Mammary epithelial cell (primary cell): ENCODE measurements at regions of chr17 and their contacts with region 1.

Region 1: DNA sequence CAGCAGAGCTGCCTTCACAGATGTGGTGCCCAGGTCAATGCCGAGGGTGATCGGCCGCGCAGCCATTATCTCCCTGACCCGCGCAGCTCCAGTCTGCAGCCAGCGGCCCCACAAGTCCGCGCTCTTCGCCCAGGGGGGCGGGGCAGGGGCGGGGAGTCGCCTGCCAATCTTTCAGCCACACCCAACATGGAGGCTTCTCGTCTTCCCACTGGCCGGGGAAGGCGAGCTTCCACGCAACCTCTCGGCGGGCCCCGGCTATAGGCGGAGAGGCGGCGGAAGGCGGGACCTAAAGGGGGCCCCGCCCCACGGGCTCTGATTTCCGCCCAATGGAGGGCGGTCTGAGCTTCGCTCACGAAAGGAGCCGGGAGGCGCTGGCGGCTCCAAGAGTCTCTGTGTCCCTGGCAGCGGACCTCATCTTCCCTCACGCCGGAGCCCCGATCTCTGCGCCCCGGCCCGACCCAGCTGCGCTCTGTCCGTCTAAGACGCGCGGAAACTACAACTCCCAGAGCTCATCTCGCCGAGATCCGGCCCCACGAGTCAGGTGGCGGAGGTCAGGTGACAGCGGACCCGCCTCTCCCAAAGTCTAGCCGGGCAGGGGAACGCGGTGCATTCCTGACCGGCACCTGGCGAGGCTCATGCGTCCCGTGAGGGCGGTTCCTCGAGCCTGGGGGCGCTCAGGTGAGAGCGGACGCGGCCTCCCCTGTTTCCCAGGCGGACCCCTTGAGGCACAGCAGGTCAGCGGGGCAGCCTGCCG is at the starts of genes CTNS and SHPK:
- DNase-seq: peak; percentile 95
- H3K4me3 ChIP-seq: peak within 1 kb of the TSS; percentile 70 to 98 (median 95)
- H3K27ac ChIP-seq: peak within 1 kb of the TSS; percentile 87
- H3K4me1 ChIP-seq: peaks cover 3% of the 10 kb centered on the region
- H3K27me3 ChIP-seq: no peaks in the 10 kb centered on the region
- CTCF ChIP-seq: no peak
- total RNA-seq, gene CTNS: 16.9 to 18.8 TPM
- total RNA-seq, gene SHPK: 11.8 to 14.5 TPM

Region 2: DNA sequence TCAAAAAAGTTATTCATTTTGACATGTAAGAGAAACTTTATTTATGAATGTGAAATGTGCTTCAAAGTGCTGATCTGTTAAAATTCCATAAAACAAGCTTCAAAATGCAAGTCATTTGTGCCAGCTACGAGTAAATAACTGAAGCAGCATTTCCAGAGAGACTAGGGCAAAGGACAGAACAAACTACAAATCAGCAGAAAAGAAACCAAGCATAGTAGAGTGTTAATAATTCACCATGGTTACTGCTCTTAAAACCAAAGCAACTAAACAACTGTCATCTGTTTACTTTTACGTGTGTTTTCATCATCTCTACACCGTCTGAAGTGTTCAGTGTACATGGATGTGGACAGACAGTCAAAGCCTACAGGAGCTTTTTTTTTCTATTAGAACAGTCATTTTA is 162.1 kb before region 1 on chr17:
- CTCF ChIA-PET with region 1: interaction called, 10 read pairs
- dilution Hi-C with region 1: no loop called
- in situ Hi-C with region 1: no loop called
- intact Hi-C with region 1: loop called (anchors 5 kb)
- DNase-seq: no peak
- H3K4me3 ChIP-seq: no peak overlapping the region
- H3K27ac ChIP-seq: no peak overlapping the region
- H3K4me1 ChIP-seq: no peaks in the 10 kb centered on the region
- H3K27me3 ChIP-seq: no peaks in the 10 kb centered on the region
- CTCF ChIP-seq: no peak

Region 3: GRCh38 chr17:3575511-3575910 is 60.8 kb before region 1 on chr17:
- CTCF ChIA-PET with region 1: no interaction called
- dilution Hi-C with region 1: no loop called
- in situ Hi-C with region 1: no loop called
- intact Hi-C with region 1: loop called (anchors 1 kb)
- DNase-seq: peak; percentile 96
- H3K4me3 ChIP-seq: no peak overlapping the region
- H3K27ac ChIP-seq: peak overlapping the region; percentile 68
- H3K4me1 ChIP-seq: peaks cover 14% of the 10 kb centered on the region
- H3K27me3 ChIP-seq: no peaks in the 10 kb centered on the region
- CTCF ChIP-seq: no peak

Region 4: GRCh38 chr17:3602499-3602898 is 33.8 kb before region 1 on chr17:
- CTCF ChIA-PET with region 1: no interaction called
- dilution Hi-C with region 1: no loop called
- in situ Hi-C with region 1: no loop called
- intact Hi-C with region 1: loop called (anchors 1 kb)
- DNase-seq: no peak
- H3K4me3 ChIP-seq: no peak overlapping the region
- H3K27ac ChIP-seq: no peak overlapping the region
- H3K4me1 ChIP-seq: peaks cover 17% of the 10 kb centered on the region
- H3K27me3 ChIP-seq: no peaks in the 10 kb centered on the region
- CTCF ChIP-seq: peak; percentile 27 to 48